ENCODE measurements at regions of chr5 and their contacts with region 1.

Region 1: GRCh38 chr5:97162045-97162444 is 19.6 kb upstream of the LIX1 start:
- DNase-seq: no peak
- H3K4me3 ChIP-seq: no peak overlapping the region
- H3K27ac ChIP-seq: no peak overlapping the region
- H3K4me1 ChIP-seq: no peaks in the 10 kb centered on the region
- H3K27me3 ChIP-seq: no peaks in the 10 kb centered on the region
- CTCF ChIP-seq: peak; percentile 84 to 91 (median 85)
- POLR2A ChIP-seq: no peak

Region 2: DNA sequence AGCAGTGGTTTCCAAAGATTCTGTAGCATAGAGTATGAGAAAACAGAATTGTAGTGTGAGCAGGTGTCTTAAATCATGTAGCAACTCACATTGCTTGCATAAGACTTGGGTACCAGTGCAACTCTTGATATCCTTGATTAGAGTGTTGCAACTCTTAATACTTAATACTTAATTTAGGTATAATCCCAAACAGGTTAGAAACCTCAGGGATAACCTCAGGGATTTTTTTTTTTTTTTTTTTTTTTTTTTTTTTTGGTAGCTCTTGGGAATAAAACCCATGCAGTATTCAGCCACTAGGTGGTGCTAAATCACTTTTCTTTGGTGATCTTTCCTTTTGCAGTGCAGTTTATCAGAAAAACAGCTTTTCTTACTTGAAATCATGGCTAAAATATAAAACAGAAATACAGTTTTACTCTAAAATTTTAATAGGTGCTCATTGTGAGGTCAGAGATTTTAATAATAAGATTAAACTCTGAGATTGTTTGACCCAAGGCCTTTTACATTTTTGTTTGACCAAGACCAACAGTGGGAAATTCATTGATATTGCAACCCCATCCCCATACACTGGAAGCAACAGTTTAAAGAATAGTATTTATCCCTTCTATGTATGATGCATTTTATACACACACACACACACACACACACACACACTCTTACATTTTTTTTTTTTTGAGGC is 409.6 kb before region 1 on chr5:
- intact Hi-C with region 1: loop called (anchors 10 kb)
- DNase-seq: no peak
- H3K4me3 ChIP-seq: no peak overlapping the region
- H3K27ac ChIP-seq: peak overlapping the region in 1 of 4 donors; percentile 42
- H3K4me1 ChIP-seq: peaks cover 0 to 4% (median 0%) of the 10 kb centered on the region in 3 donors
- H3K27me3 ChIP-seq: no peaks in the 10 kb centered on the region
- CTCF ChIP-seq: peak; percentile 26 to 75 (median 48)
- POLR2A ChIP-seq: no peak

Region 3: DNA sequence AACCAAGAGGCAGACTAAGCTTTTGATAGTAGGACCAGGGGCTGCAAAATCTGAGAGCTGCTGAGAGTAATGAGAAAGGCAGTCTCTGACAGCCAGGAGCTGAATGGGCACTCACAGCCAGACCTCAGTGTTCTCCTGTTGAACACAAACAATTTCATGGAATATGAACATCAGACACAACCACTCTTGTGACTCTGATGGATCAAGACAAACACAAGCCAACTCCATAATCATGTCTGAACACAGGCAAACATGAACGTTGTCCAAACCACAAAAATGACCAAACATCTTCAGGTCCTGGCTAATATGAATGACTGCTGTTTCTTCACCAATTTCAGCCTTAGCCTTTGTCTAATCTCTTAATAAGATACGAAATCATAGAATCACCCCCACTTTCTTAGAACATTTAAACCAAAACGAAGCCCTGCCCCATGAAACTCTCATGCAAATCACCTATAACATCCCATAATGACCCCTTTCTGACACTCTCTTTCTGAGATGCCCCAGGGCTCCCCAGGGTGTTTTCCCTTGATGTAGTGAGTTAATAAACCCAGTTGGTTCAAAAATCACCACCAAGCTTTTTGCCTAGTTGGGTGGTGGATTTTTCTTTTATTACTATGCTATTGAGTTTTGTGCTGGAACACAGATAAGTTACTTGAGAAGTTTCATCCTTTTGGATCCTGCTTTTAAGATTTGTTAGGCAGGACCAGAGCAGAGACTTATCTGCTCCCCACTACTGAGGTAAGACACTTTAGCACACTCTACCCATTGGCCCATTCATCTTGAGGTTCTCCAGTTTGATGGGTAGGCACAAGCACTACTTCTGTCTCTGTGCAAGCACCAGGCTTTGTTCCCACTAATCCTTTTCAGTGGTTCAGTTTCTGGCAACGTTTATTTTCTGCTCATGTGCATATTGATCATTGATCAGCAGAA is 291.7 kb before region 1 on chr5:
- intact Hi-C with region 1: loop called (anchors 5 kb)
- DNase-seq: no peak
- H3K4me3 ChIP-seq: no peak overlapping the region
- H3K27ac ChIP-seq: no peak overlapping the region
- H3K4me1 ChIP-seq: peaks cover 0 to 12% (median 0%) of the 10 kb centered on the region in 3 donors
- H3K27me3 ChIP-seq: no peaks in the 10 kb centered on the region
- CTCF ChIP-seq: no peak
- POLR2A ChIP-seq: no peak

Region 4: GRCh38 chr5:96934708-96935558 is 227.1 kb before region 1 on chr5:
- intact Hi-C with region 1: no loop called
- DNase-seq: peak; percentile 82
- H3K4me3 ChIP-seq: peak overlapping the region; percentile 86 to 97 (median 92)
- H3K27ac ChIP-seq: peak overlapping the region; percentile 96 to 99 (median 98)
- H3K4me1 ChIP-seq: peaks cover 15 to 61% (median 28%) of the 10 kb centered on the region in 3 donors
- H3K27me3 ChIP-seq: no peaks in the 10 kb centered on the region
- CTCF ChIP-seq: peak in 3 of 6 experiments; percentile 6 to 44 (median 37)
- POLR2A ChIP-seq: peak in 2 of 4 donors; percentile 32 to 78

Region 5: GRCh38 chr5:97250113-97250512 is 88.1 kb after region 1 on chr5:
- intact Hi-C with region 1: no loop called
- DNase-seq: no peak
- H3K4me3 ChIP-seq: no peak overlapping the region
- H3K27ac ChIP-seq: no peak overlapping the region
- H3K4me1 ChIP-seq: no peaks in the 10 kb centered on the region
- H3K27me3 ChIP-seq: no peaks in the 10 kb centered on the region
- CTCF ChIP-seq: no peak
- POLR2A ChIP-seq: no peak

Region 6: GRCh38 chr5:97297063-97297703 is 135.1 kb after region 1 on chr5:
- intact Hi-C with region 1: no loop called
- DNase-seq: no peak
- H3K4me3 ChIP-seq: no peak overlapping the region
- H3K27ac ChIP-seq: no peak overlapping the region
- H3K4me1 ChIP-seq: no peaks in the 10 kb centered on the region
- H3K27me3 ChIP-seq: no peaks in the 10 kb centered on the region
- CTCF ChIP-seq: peak in 3 of 6 experiments; percentile 9 to 53 (median 18)
- POLR2A ChIP-seq: no peak

Region 7: GRCh38 chr5:97383996-97384395 is 222.0 kb after region 1 on chr5:
- intact Hi-C with region 1: no loop called
- DNase-seq: no peak
- H3K4me3 ChIP-seq: no peak overlapping the region
- H3K27ac ChIP-seq: no peak overlapping the region
- H3K4me1 ChIP-seq: no peaks in the 10 kb centered on the region
- H3K27me3 ChIP-seq: no peaks in the 10 kb centered on the region
- CTCF ChIP-seq: no peak
- POLR2A ChIP-seq: no peak